ENCODE measurements at regions of chr13 and their contacts with region 1.

Region 1: DNA sequence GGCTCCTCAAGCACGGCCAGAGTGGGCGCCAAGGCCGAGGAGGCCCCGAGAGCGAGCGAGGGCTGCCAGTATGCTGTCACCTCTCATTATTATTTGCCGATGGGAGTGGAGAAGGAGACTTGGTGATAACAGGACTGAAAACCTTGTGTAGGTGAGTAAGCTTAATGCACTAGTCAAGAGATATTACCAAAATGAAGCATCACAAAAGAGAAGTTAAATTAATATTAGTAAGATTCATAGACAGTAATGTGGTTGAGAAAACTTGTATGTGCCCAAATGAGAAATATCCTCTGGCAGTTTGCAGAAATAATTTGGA is 204.5 kb upstream of the SLITRK1 start:
- DNase-seq: no peak
- ATAC-seq: no peak
- H3K4me3 ChIP-seq: no peak overlapping the region
- H3K4me3 Mint-ChIP-seq: peak overlapping the region in 2 of 3 donors; percentile 33 to 34
- H3K27ac ChIP-seq: no peak overlapping the region
- H3K27ac Mint-ChIP-seq: no peak overlapping the region
- H3K4me1 ChIP-seq: no peaks in the 10 kb centered on the region
- H3K4me1 Mint-ChIP-seq: no peaks in the 10 kb centered on the region
- H3K27me3 ChIP-seq: no peaks in the 10 kb centered on the region
- H3K27me3 Mint-ChIP-seq: no peaks in the 10 kb centered on the region

Region 2: DNA sequence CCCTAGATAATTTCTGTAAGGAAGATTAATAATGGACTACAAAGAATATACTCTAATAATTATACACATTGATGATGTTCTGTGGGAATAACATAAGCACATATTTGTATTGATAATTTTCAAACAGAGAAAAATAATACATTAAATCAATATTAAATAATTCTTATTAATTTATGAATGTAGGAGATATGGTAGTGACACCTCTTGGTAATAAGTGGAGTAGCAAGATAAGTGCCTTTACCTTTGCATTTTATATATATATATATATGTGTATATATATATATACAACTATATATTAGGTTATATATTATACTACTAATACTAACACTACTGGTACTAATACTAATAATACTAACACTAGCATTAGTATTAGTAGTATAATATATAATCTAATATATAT is 1110.3 kb before region 1 on chr13:
- CTCF ChIA-PET with region 1: no interaction called
- POLR2A ChIA-PET with region 1: no interaction called
- DNase-seq: no peak
- ATAC-seq: no peak
- H3K4me3 ChIP-seq: no peak overlapping the region
- H3K4me3 Mint-ChIP-seq: no peak overlapping the region
- H3K27ac ChIP-seq: no peak overlapping the region
- H3K27ac Mint-ChIP-seq: no peak overlapping the region
- H3K4me1 ChIP-seq: no peaks in the 10 kb centered on the region
- H3K4me1 Mint-ChIP-seq: no peaks in the 10 kb centered on the region
- H3K27me3 ChIP-seq: no peaks in the 10 kb centered on the region
- H3K27me3 Mint-ChIP-seq: no peaks in the 10 kb centered on the region

Region 3: GRCh38 chr13:84296401-84296800 is 209.6 kb after region 1 on chr13:
- CTCF ChIA-PET with region 1: no interaction called
- POLR2A ChIA-PET with region 1: no interaction called
- DNase-seq: no peak
- ATAC-seq: no peak
- H3K4me3 ChIP-seq: no peak overlapping the region
- H3K4me3 Mint-ChIP-seq: no peak overlapping the region
- H3K27ac ChIP-seq: no peak overlapping the region
- H3K27ac Mint-ChIP-seq: no peak overlapping the region
- H3K4me1 ChIP-seq: no peaks in the 10 kb centered on the region
- H3K4me1 Mint-ChIP-seq: no peaks in the 10 kb centered on the region
- H3K27me3 ChIP-seq: no peaks in the 10 kb centered on the region
- H3K27me3 Mint-ChIP-seq: no peaks in the 10 kb centered on the region

Region 4: DNA sequence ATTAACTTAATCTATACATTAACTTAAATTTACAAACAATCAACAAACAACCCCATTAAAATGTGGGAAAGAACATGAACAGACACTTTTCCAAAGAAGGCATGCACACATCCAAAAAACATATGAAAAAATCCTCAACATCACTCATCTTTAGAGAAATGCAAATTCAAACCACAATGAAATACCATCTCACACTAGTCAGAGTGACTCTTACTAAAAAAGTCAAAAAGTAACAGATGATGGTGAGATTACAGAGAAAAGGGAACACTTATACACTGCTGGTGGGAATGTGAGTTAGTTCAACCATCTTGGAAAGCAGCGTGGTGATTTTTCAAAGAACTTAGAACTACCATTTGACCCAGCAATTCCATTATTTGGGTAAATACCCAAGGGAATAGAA is 554.7 kb after region 1 on chr13:
- CTCF ChIA-PET with region 1: no interaction called
- POLR2A ChIA-PET with region 1: interaction called in 1 of 2 experiments, 10 read pairs
- DNase-seq: no peak
- ATAC-seq: no peak
- H3K4me3 ChIP-seq: no peak overlapping the region
- H3K4me3 Mint-ChIP-seq: no peak overlapping the region
- H3K27ac ChIP-seq: no peak overlapping the region
- H3K27ac Mint-ChIP-seq: no peak overlapping the region
- H3K4me1 ChIP-seq: no peaks in the 10 kb centered on the region
- H3K4me1 Mint-ChIP-seq: no peaks in the 10 kb centered on the region
- H3K27me3 ChIP-seq: no peaks in the 10 kb centered on the region
- H3K27me3 Mint-ChIP-seq: no peaks in the 10 kb centered on the region

Measured in T-cell (primary cell).